Right ventricle myocardium inferior (tissue), 1 donor: ENCODE measurements at regions of chr18 and their contacts with region 1.

Region 1: DNA sequence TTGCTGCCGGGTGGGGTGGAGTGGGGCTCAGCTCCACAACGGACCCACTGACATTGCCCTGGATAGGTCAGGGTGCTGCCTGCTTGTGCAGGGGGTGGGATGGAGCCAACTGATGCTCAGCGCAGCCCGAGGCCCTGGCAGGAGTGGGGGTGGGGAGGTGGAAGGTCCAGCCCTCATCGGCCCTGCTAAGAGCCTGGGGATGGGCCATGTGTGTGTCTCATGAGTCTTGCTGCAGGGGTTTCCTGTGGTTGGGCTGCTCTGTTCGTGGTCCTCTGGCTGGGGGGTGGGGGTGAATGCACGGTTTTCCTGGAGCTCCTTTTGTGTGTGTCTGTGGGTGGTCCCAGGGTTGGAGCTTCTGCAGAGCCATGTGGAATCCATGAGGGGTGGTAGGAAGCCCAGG is 39.4 kb upstream of the GALR1 start:
- DNase-seq: no peak
- ATAC-seq: no peak

Region 2: GRCh38 chr18:77000527-77000926 is 209.7 kb before region 1 on chr18:
- intact Hi-C with region 1: loop called (anchors 2 kb)
- DNase-seq: peak; percentile 88
- ATAC-seq: peak; percentile 54